Common myeloid progenitor, CD34-positive (primary cell): ENCODE measurements at regions of chr19 and their contacts with region 1.

Region 1: GRCh38 chr19:35693830-35694599 is 10.3 kb upstream of the ZBTB32 start:
- DNase-seq: peak; percentile 87 to 92 (median 91)
- H3K4me3 ChIP-seq: no peak overlapping the region
- H3K27ac ChIP-seq: no peak overlapping the region
- H3K4me1 ChIP-seq: no peaks in the 10 kb centered on the region
- H3K27me3 ChIP-seq: peaks cover 0 to 4% (median 0%) of the 10 kb centered on the region in 5 experiments

Region 2: DNA sequence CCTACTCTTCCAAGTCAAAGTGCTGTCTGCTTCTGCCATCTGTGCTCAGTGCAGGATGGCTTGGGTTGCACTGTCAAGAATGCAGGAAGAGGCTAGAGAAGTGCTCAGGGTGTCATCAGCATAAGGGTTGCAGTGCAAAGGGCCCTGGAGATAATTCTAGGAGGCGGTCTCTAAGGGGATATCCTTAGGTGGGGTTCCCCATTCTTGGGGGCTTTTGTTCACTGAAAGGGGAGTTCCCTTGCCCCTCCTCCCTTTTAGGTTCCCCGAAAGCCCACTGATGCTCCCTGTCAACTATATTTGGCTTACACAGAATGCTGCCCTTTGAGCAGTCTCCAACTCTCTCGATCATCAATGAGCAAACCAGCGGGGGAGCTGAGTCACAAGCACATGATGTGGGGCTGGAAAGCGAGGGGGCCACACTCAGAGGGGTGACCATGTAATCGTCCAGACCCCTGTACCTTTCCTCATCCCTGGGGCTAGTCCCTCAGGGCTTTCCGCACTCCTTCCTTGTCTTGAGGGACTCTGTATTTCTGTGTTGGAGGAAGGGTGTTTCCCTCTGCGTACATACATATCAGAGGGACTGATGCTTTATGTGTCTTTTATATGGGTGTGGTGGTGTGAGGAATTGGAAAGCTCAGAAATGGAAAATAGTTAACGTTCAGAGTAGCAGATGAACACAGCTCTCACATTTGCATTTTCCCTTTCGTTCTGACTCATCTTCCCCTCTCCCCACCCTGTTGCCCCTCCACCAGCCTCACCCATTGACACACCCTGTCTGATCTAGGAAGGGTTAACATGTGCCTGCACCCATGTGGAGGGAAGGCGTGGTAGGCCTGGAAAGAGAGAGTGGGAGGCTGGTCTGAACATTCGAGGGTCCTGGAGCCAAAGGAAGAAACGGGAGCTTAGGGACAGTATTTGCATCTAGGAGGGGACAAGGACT is 17.0 kb after region 1 on chr19:
- CTCF ChIA-PET with region 1: interaction called, 43 read pairs
- POLR2A ChIA-PET with region 1: interaction called, 3 read pairs
- DNase-seq: no peak
- H3K4me3 ChIP-seq: no peak overlapping the region
- H3K27ac ChIP-seq: no peak overlapping the region
- H3K4me1 ChIP-seq: peaks cover 0 to 19% (median 12%) of the 10 kb centered on the region in 4 experiments
- H3K27me3 ChIP-seq: no peaks in the 10 kb centered on the region

Region 3: DNA sequence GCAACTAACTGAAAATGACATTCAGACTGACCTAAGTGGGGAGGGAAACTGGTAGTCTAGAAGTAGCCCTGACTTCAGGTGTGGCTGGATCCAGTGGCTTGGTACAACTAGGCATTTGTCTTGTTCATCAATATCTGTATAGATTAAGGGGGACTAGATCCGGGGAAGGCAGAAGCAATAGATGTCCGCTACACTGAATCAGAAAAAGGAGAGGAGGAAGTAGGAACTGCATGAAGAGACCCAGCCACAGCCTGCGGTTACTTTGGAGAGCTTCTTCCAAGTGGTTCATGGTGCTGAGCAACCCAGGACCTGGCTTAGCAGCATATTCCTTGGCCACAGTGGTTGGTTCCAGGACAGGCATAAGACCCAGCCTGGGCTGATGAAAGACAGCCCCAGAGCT is 128.6 kb after region 1 on chr19:
- CTCF ChIA-PET with region 1: interaction called, 10 read pairs
- POLR2A ChIA-PET with region 1: interaction called, 3 read pairs
- DNase-seq: peak in 2 of 3 donors; percentile 46 to 55
- H3K4me3 ChIP-seq: no peak overlapping the region
- H3K27ac ChIP-seq: no peak overlapping the region
- H3K4me1 ChIP-seq: peaks cover 0 to 7% (median 0%) of the 10 kb centered on the region in 4 experiments
- H3K27me3 ChIP-seq: peaks cover 0 to 17% (median 2%) of the 10 kb centered on the region in 5 experiments